Astrocyte of the cerebellum (primary cell): ENCODE measurements at regions of chr3 and their contacts with region 1.

Region 1: DNA sequence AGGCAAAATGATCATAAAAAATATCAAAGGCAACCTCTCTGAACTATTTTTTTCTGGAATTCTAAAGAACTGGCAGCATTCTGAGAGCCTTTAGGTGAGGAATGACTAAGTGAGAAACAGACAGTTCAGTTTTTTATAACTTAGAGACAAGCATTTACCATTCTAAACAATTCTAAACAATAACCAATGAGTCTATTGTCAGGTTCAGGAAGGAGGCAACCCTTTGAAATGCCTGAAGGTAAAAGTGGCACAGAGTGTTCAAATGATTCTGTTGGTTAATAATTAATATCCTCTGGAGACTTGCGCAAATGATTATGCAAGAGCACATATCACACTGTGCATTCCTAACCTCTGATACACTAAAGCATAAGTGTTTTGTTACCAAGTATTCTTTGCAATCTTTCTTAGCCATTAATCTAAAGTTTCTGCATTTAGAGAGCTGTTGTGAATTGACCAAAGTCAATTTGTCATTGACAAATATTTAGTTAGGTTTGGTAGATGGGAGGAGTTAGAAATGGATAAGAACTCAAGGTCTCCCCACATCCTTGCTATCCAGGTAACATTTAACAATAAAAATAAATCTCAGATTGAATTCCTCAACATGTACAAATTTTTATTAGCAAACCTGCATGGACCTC is 9.2 kb upstream of the TGFBR2 start:
- DNase-seq: peak; percentile 38
- H3K4me3 ChIP-seq: no peak overlapping the region
- CTCF ChIP-seq: no peak

Region 2: GRCh38 chr3:30563956-30564355 is 33.3 kb before region 1 on chr3:
- in situ Hi-C with region 1: loop called (anchors 5 kb)
- DNase-seq: no peak
- H3K4me3 ChIP-seq: no peak overlapping the region
- CTCF ChIP-seq: no peak